T-cell (primary cell): ENCODE measurements at regions of chr3 and their contacts with region 1.

Region 1: DNA sequence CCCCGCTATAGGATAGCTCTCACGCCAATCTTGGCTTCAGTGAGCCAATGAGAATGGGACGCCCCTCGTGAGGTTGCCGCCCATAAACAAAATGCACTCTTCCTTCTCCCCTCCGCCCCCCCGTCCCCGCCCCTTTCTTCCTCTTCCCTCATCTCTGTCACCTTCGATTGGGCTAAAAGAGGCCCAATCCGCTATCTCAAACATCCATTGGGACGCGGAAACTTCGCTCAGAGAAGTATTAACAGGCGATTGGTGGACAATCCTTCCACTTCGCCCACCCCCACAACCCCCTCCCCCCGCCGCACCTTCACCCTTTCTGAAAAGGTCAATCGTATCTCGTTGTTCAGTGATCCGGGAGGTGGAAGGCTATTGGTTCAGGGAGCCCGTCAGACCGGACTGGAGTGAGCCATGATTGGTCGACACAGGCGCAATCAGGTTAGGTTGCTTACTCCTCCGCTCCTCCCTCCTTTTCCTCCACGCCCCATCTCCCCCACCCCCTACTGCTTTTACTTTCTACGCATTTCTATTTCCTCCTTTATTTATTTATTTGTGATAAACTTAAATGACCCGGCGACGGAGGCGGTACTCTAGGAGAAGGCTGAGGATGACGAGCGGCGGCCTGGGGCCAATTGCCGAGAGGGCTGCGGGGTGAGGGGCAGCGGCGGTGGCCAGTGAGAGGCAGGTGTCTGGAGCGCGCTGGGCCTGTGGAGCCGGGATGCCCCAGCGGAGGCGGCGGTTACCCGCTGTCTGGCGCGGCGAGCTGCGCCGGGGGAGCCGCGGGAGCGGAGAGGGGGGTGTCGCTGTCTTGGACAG is 447 bp upstream of the ZBTB20 start:
- DNase-seq: peak; percentile 89 to 100 (median 98)
- ATAC-seq: peak; percentile 78 to 81 (median 80)
- H3K4me3 ChIP-seq: peak overlapping the region; percentile 76 to 80
- H3K4me3 Mint-ChIP-seq: peak overlapping the region; percentile 92 to 98 (median 96)
- H3K27ac ChIP-seq: peak overlapping the region; percentile 97
- H3K27ac Mint-ChIP-seq: peak overlapping the region; percentile 99
- H3K4me1 ChIP-seq: peaks cover 7 to 13% of the 10 kb centered on the region in 2 experiments
- H3K4me1 Mint-ChIP-seq: peaks cover 35 to 41% (median 35%) of the 10 kb centered on the region in 3 donors
- H3K27me3 ChIP-seq: no peaks in the 10 kb centered on the region
- H3K27me3 Mint-ChIP-seq: no peaks in the 10 kb centered on the region

Region 2: GRCh38 chr3:115062412-115062956 is 85.1 kb before region 1 on chr3:
- CTCF ChIA-PET with region 1: no interaction called
- POLR2A ChIA-PET with region 1: interaction called in 1 of 2 experiments, 14 read pairs
- DNase-seq: no peak
- ATAC-seq: no peak
- H3K4me3 ChIP-seq: no peak overlapping the region
- H3K4me3 Mint-ChIP-seq: no peak overlapping the region
- H3K27ac ChIP-seq: no peak overlapping the region
- H3K27ac Mint-ChIP-seq: no peak overlapping the region
- H3K4me1 ChIP-seq: no peaks in the 10 kb centered on the region
- H3K4me1 Mint-ChIP-seq: peaks cover 0 to 10% (median 6%) of the 10 kb centered on the region in 3 donors
- H3K27me3 ChIP-seq: no peaks in the 10 kb centered on the region
- H3K27me3 Mint-ChIP-seq: no peaks in the 10 kb centered on the region

Region 3: DNA sequence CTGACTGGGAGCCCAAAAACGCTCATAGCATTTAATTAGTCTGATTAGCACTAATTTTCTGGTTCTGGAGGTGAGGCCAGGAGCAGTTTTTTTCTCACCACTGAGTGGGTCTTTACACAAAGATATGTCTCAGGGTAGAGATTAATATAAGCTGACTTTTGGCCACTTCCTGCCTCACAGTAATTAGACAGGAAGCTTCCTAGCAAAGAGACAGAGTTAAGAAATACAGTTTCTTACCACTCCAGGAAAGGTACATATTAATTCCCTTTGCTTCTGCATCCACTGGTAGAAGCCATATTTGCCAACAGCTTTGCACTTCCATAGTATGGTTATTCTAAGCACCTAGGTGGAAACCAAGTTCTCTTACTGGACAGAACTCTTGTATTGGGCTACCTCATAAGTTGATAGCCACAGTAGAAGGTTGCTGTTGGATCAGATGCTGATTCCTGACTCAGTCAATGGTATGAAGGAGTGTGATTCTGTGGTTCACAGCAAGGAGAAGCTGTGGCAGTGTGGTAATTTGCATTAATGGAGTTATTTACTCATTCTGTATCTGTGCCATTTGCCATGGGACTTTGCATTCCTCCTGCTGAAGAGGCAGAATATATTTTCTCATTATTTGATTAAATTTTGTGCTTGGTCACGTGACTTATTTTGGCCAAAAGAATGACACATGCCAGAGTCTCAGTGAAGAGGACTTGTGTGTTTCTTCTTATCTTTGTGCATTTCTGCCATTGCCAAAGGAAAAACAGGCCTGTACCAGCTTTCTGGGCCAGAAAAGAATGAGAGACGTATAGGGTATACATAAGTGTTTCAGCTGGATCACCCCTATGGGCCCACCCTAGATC is 17.1 kb after region 1 on chr3:
- CTCF ChIA-PET with region 1: interaction called, 9 to 41 read pairs
- POLR2A ChIA-PET with region 1: interaction called, 8 to 38 read pairs
- DNase-seq: peak in 1 of 35 experiments; percentile 34
- ATAC-seq: peak in 2 of 4 experiments; percentile 40 to 47
- H3K4me3 ChIP-seq: no peak overlapping the region
- H3K4me3 Mint-ChIP-seq: peak overlapping the region in 1 of 3 donors; percentile 52
- H3K27ac ChIP-seq: peak overlapping the region; percentile 63
- H3K27ac Mint-ChIP-seq: peak overlapping the region; percentile 91 to 93
- H3K4me1 ChIP-seq: peaks cover 21 to 24% of the 10 kb centered on the region in 2 experiments
- H3K4me1 Mint-ChIP-seq: peaks cover 35 to 38% (median 35%) of the 10 kb centered on the region in 3 donors
- H3K27me3 ChIP-seq: no peaks in the 10 kb centered on the region
- H3K27me3 Mint-ChIP-seq: no peaks in the 10 kb centered on the region

Region 4: DNA sequence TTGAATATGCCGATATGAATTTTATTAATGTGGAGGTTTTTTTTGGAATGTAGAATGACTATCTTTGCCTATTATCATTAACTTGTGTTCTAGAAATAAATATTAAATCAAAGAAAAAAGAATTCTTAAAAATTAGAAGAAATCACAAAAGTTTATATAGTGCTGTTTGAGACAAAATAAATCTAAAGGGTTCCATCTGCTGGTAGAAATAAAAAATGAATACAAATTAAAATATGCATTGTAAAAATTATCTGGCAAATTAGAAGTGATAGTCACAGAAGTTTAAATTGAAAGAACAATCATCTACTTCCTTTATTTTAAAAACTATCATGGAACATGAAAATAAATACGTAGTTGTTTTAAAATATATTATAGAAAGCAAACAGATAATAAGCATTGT is 22.3 kb after region 1 on chr3:
- CTCF ChIA-PET with region 1: interaction called, 9 to 41 read pairs
- POLR2A ChIA-PET with region 1: interaction called, 8 to 38 read pairs
- DNase-seq: peak in 1 of 35 experiments; percentile 27
- ATAC-seq: no peak
- H3K4me3 ChIP-seq: no peak overlapping the region
- H3K4me3 Mint-ChIP-seq: no peak overlapping the region
- H3K27ac ChIP-seq: no peak overlapping the region
- H3K27ac Mint-ChIP-seq: no peak overlapping the region
- H3K4me1 ChIP-seq: peaks cover 9 to 10% of the 10 kb centered on the region in 2 experiments
- H3K4me1 Mint-ChIP-seq: peaks cover 12 to 13% (median 12%) of the 10 kb centered on the region in 3 donors
- H3K27me3 ChIP-seq: no peaks in the 10 kb centered on the region
- H3K27me3 Mint-ChIP-seq: no peaks in the 10 kb centered on the region

Region 5: DNA sequence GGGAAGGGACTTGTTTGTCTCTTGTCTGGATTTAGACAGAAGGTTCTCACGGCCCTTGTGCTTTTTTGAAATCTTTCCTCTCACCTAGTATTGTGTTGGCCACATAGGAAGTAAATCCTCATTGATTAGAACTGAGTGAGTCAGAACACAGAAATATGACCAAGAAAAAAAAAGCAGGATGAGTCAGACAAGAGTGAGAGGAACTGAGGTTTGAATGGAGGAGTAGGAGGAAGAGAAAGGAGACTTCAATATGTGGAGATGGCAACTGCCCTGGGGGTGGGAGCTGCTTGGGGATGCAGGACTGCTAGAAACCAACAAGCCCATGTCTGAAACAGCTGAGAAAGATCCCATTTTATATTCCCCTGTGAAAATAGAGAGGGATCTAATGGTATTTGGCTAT is 193.7 kb after region 1 on chr3:
- CTCF ChIA-PET with region 1: no interaction called
- POLR2A ChIA-PET with region 1: no interaction called
- DNase-seq: no peak
- ATAC-seq: no peak
- H3K4me3 ChIP-seq: no peak overlapping the region
- H3K4me3 Mint-ChIP-seq: no peak overlapping the region
- H3K27ac ChIP-seq: no peak overlapping the region
- H3K27ac Mint-ChIP-seq: no peak overlapping the region
- H3K4me1 ChIP-seq: no peaks in the 10 kb centered on the region
- H3K4me1 Mint-ChIP-seq: no peaks in the 10 kb centered on the region
- H3K27me3 ChIP-seq: no peaks in the 10 kb centered on the region
- H3K27me3 Mint-ChIP-seq: peaks cover 0 to 3% of the 10 kb centered on the region in 2 donors

Region 6: DNA sequence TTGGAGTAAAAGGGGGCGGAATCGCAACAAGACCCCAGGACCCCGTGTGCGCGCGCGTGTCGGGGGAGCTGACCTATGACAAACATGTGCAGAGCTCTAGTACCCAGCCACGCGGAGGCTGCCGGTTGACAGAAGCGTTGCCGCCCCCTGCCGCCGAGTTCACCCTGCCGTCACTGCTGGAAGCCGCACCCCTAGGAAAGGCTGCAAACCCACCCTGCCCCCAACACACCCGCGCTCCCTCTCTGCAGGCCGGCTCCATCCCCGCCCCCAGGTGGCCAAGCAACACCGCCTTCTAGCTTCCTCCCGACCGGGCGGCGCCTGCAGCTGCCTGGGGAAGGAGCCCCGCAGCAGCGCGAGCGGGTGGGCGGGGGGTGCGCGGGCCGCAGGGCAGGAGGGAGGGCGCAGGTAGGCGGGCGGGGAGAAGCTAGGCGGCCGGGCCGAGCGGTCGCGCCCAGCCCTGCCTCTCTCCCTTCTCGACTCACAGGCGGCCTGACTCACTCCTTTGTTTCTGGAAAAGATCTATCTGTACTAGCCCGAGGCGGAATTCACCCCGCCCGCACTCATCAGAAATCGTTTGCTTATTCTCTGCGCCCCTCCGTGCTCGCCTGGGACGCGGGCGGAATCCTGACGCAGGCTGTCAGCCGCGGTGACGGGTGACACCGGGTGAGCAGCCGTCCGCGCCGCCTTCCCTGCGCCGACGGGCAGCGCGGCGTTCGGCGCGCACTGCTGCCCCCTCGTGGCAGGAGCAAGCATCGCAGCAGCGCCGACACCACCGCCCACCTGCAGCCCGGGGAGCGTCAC is 636.6 kb after region 1 on chr3:
- CTCF ChIA-PET with region 1: interaction called in 1 of 2 experiments, 7 read pairs
- POLR2A ChIA-PET with region 1: interaction called in 1 of 2 experiments, 11 read pairs
- DNase-seq: peak; percentile 78 to 95 (median 91)
- ATAC-seq: peak; percentile 86 to 91 (median 88)
- H3K4me3 ChIP-seq: peak overlapping the region; percentile 64 to 79
- H3K4me3 Mint-ChIP-seq: peak overlapping the region; percentile 87 to 94 (median 93)
- H3K27ac ChIP-seq: peak overlapping the region; percentile 97
- H3K27ac Mint-ChIP-seq: peak overlapping the region; percentile 96 to 98
- H3K4me1 ChIP-seq: peaks cover 2 to 15% of the 10 kb centered on the region in 2 experiments
- H3K4me1 Mint-ChIP-seq: peaks cover 11 to 16% (median 16%) of the 10 kb centered on the region in 3 donors
- H3K27me3 ChIP-seq: no peaks in the 10 kb centered on the region
- H3K27me3 Mint-ChIP-seq: peaks cover 0 to 2% of the 10 kb centered on the region in 2 donors